RWPE1 (cell line): ENCODE measurements at regions of chr21 and their contacts with region 1.

Region 1: DNA sequence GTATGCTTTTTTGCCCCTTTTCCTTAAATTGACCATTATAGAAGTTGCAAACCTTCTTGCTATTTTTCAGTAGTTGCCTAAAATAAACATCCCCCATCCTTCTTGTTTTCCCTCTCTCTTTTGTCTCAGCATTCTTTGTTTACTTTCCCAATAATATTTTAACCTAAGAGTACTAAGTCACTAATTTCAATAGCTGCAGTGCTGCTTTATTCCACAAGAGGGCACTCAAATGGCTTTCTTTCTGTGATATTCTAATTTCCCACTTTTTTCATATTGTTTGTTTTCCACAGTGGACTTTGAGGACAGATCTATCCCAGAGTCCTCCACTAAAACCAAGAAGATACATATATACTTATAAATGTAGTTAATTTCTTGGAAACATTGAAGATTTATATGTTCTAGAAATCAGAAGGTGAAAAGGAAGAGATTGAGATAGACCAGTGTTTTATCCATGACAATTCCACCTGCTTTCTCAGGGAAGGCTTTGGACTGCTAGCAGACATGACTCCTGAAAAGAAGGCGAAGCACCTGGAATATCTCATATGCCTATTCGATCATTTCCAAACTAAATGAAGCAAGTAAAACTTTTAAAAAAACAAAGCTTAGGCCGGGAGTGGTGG is 104.8 kb upstream of the GRIK1 start:
- DNase-seq: peak; percentile 8
- H3K27ac ChIP-seq: no peak overlapping the region
- CTCF ChIP-seq: peak; percentile 95

Region 2: DNA sequence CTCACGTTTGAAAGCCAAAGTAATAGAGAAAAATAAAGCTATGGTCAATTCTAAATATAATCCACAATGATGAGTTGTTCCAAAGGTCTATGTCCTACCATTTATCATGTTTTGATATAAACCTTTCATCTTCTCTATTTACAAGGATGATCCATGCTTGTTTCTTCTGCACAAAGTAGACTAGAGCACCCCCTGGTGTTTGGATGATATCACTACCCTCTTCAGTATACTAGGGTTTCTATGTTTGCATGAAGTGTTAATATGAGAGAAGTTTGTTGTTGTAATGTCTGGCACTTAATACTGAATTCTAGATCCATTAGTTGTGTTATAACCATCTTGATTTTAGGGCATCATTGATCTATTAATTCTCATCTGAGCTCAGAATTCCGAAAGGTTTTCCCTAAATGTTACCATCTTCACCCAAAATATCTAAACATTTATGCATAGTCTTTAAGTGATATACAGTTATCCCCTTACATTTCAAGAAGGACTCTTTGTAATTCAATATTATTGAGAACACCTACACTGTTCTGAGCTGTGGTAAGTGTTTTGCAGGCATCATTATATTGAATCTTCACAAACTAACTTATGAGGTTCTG is 150.2 kb after region 1 on chr21:
- CTCF ChIA-PET with region 1: interaction called, 13 read pairs
- POLR2A ChIA-PET with region 1: no interaction called
- DNase-seq: peak; percentile 48
- H3K27ac ChIP-seq: no peak overlapping the region
- CTCF ChIP-seq: peak; percentile 66